ENCODE measurements at regions of chr1 and their contacts with region 1.

Region 1: DNA sequence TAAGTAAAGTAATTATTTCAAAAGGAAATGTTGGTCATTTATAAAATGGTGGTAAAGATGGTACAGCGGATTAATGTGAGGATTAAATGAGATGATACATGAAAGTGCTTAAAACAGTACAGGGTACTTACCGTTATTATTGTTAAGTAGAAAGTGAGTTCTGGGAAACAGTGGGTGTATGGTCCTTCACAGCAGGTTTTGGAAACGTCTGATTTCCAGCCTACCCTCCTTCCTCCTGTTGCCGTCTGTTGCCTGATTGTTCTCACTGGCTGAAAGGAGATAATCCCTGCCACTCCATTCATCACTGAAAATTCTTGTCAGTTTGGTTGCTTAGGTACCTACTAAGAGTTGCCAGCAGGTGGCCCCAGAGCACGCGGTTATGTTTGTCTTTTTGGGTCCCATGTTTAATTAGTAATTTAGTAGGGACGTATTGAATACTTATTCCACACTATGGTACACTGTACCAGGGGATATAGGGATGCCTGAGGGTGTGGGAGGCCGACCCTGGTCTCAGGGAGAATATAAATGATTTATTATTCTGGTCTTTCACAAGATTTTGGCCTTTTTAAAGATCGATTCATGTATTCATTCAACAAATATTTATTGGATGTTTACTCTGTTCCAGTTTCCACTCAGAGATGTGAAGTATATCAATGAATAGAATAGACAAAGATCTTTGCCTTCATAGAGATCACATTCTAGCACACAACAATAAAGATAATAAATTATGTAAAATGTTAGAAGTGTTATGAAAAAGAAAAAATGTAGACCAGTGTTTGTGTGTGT is 30.8 kb upstream of the RPTN start:
- DNase-seq: peak; percentile 38
- ATAC-seq: peak; percentile 45
- H3K4me3 ChIP-seq: no peak overlapping the region
- H3K27ac ChIP-seq: no peak overlapping the region
- H3K4me1 ChIP-seq: no peaks in the 10 kb centered on the region
- H3K27me3 ChIP-seq: no peaks in the 10 kb centered on the region
- CTCF ChIP-seq: peak; percentile 60
- POLR2A ChIP-seq: no peak
- RAD21 ChIP-seq: peak; percentile 54

Region 2: GRCh38 chr1:150944856-150945255 is 1245.0 kb before region 1 on chr1:
- CTCF ChIA-PET with region 1: no interaction called
- POLR2A ChIA-PET with region 1: no interaction called
- dilution Hi-C with region 1: no loop called
- in situ Hi-C with region 1: no loop called
- intact Hi-C with region 1: no loop called
- DNase-seq: no peak
- ATAC-seq: no peak
- H3K4me3 ChIP-seq: no peak overlapping the region
- H3K27ac ChIP-seq: no peak overlapping the region
- H3K4me1 ChIP-seq: no peaks in the 10 kb centered on the region
- H3K27me3 ChIP-seq: no peaks in the 10 kb centered on the region
- CTCF ChIP-seq: no peak
- POLR2A ChIP-seq: no peak
- RAD21 ChIP-seq: no peak

Region 3: GRCh38 chr1:151923436-151923835 is 266.4 kb before region 1 on chr1:
- CTCF ChIA-PET with region 1: no interaction called
- POLR2A ChIA-PET with region 1: no interaction called
- dilution Hi-C with region 1: no loop called
- in situ Hi-C with region 1: no loop called
- intact Hi-C with region 1: no loop called
- DNase-seq: no peak
- ATAC-seq: no peak
- H3K4me3 ChIP-seq: no peak overlapping the region
- H3K27ac ChIP-seq: no peak overlapping the region
- H3K4me1 ChIP-seq: no peaks in the 10 kb centered on the region
- H3K27me3 ChIP-seq: peaks cover 12% of the 10 kb centered on the region
- CTCF ChIP-seq: no peak
- POLR2A ChIP-seq: no peak
- RAD21 ChIP-seq: no peak

Region 4: GRCh38 chr1:151934048-151934493 is 255.8 kb before region 1 on chr1:
- CTCF ChIA-PET with region 1: no interaction called
- POLR2A ChIA-PET with region 1: no interaction called
- dilution Hi-C with region 1: no loop called
- in situ Hi-C with region 1: no loop called
- intact Hi-C with region 1: loop called (anchors 10 kb)
- DNase-seq: peak; percentile 60
- ATAC-seq: peak; percentile 96
- H3K4me3 ChIP-seq: no peak overlapping the region
- H3K27ac ChIP-seq: no peak overlapping the region
- H3K4me1 ChIP-seq: no peaks in the 10 kb centered on the region
- H3K27me3 ChIP-seq: peaks cover 7% of the 10 kb centered on the region
- CTCF ChIP-seq: peak; percentile 93
- POLR2A ChIP-seq: no peak
- RAD21 ChIP-seq: peak; percentile 96

Region 5: DNA sequence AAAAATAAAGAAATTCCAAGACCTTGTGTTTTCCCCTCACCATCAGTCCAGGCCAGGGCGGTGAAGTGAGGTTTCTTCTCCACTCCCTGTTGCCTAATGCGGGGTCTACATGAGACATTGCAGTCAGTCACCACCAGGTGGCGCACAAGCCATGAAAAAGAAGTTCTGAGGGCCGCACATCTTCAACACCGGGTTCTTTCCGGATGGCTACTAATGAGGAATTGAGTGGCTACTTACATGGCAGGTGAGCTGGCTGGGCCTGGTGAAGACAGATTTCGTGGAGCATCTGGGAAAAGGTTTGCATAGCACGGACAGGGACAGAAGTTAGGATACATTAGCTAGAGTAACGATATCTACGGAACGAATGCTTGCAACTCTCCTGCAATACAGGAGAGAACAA is 137.2 kb before region 1 on chr1:
- CTCF ChIA-PET with region 1: interaction called, 8 read pairs
- POLR2A ChIA-PET with region 1: no interaction called
- dilution Hi-C with region 1: no loop called
- in situ Hi-C with region 1: no loop called
- intact Hi-C with region 1: loop called (anchors 1 kb)
- DNase-seq: peak; percentile 71
- ATAC-seq: peak; percentile 25
- H3K4me3 ChIP-seq: no peak overlapping the region
- H3K27ac ChIP-seq: no peak overlapping the region
- H3K4me1 ChIP-seq: peaks cover 5% of the 10 kb centered on the region
- H3K27me3 ChIP-seq: peaks cover 14% of the 10 kb centered on the region
- CTCF ChIP-seq: peak; percentile 87
- POLR2A ChIP-seq: no peak
- RAD21 ChIP-seq: peak; percentile 78

Region 6: GRCh38 chr1:152141974-152142584 is 47.8 kb before region 1 on chr1:
- CTCF ChIA-PET with region 1: interaction called, 3 read pairs
- POLR2A ChIA-PET with region 1: no interaction called
- dilution Hi-C with region 1: no loop called
- in situ Hi-C with region 1: no loop called
- intact Hi-C with region 1: loop called (anchors 1 kb)
- DNase-seq: peak; percentile 54
- ATAC-seq: peak; percentile 86
- H3K4me3 ChIP-seq: no peak overlapping the region
- H3K27ac ChIP-seq: no peak overlapping the region
- H3K4me1 ChIP-seq: no peaks in the 10 kb centered on the region
- H3K27me3 ChIP-seq: no peaks in the 10 kb centered on the region
- CTCF ChIP-seq: peak; percentile 75
- POLR2A ChIP-seq: no peak
- RAD21 ChIP-seq: peak; percentile 78

Region 7: GRCh38 chr1:152227310-152227928 is 37.6 kb after region 1 on chr1:
- CTCF ChIA-PET with region 1: interaction called, 4 read pairs
- POLR2A ChIA-PET with region 1: no interaction called
- dilution Hi-C with region 1: no loop called
- in situ Hi-C with region 1: no loop called
- intact Hi-C with region 1: loop called (anchors 1 kb)
- DNase-seq: peak; percentile 2
- ATAC-seq: peak; percentile 32; the same call in 1 of the 2 replicates
- H3K4me3 ChIP-seq: no peak overlapping the region
- H3K27ac ChIP-seq: no peak overlapping the region
- H3K4me1 ChIP-seq: no peaks in the 10 kb centered on the region
- H3K27me3 ChIP-seq: no peaks in the 10 kb centered on the region
- CTCF ChIP-seq: no peak
- POLR2A ChIP-seq: no peak
- RAD21 ChIP-seq: no peak

Region 8: DNA sequence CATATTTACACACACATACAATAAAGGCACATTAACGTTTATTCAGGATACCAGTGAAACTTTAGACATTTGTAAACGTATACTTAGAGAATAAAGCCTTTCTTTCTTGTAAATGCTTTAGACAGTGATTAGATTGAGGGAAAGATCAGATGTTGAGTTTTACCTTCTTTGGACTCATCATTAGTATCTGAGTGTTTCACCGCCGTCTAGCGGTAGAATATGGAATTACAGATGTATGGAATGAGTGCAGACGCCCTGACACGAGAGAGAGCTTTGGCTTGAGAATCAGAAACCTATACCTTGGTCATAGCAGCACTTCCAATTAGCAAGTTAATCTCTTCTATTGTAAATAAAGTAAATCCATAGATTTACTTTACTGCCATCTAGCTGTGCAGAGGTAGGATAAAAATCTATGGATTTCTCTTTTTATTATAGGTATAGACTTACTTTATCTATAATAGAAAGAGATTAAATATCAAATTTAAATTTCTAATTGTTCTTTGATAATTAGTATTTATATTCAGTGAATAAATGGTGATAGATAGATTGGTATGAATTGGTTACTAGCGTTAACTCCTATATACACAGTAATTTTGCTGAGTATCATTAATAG is 157.4 kb after region 1 on chr1:
- CTCF ChIA-PET with region 1: no interaction called
- POLR2A ChIA-PET with region 1: no interaction called
- dilution Hi-C with region 1: no loop called
- in situ Hi-C with region 1: no loop called
- intact Hi-C with region 1: no loop called
- DNase-seq: peak; percentile 52
- ATAC-seq: peak; percentile 75; the same call in 1 of the 2 replicates
- H3K4me3 ChIP-seq: no peak overlapping the region
- H3K27ac ChIP-seq: no peak overlapping the region
- H3K4me1 ChIP-seq: no peaks in the 10 kb centered on the region
- H3K27me3 ChIP-seq: no peaks in the 10 kb centered on the region
- CTCF ChIP-seq: peak; percentile 62
- POLR2A ChIP-seq: no peak
- RAD21 ChIP-seq: peak; percentile 31

Region 9: GRCh38 chr1:152440635-152441471 is 251.0 kb after region 1 on chr1:
- CTCF ChIA-PET with region 1: interaction called, 3 read pairs
- POLR2A ChIA-PET with region 1: no interaction called
- dilution Hi-C with region 1: no loop called
- in situ Hi-C with region 1: no loop called
- intact Hi-C with region 1: loop called (anchors 2 kb)
- DNase-seq: peak; percentile 54
- ATAC-seq: peak; percentile 99
- H3K4me3 ChIP-seq: no peak overlapping the region
- H3K27ac ChIP-seq: no peak overlapping the region
- H3K4me1 ChIP-seq: no peaks in the 10 kb centered on the region
- H3K27me3 ChIP-seq: no peaks in the 10 kb centered on the region
- CTCF ChIP-seq: peak; percentile 78
- POLR2A ChIP-seq: no peak
- RAD21 ChIP-seq: peak; percentile 65

Region 10: DNA sequence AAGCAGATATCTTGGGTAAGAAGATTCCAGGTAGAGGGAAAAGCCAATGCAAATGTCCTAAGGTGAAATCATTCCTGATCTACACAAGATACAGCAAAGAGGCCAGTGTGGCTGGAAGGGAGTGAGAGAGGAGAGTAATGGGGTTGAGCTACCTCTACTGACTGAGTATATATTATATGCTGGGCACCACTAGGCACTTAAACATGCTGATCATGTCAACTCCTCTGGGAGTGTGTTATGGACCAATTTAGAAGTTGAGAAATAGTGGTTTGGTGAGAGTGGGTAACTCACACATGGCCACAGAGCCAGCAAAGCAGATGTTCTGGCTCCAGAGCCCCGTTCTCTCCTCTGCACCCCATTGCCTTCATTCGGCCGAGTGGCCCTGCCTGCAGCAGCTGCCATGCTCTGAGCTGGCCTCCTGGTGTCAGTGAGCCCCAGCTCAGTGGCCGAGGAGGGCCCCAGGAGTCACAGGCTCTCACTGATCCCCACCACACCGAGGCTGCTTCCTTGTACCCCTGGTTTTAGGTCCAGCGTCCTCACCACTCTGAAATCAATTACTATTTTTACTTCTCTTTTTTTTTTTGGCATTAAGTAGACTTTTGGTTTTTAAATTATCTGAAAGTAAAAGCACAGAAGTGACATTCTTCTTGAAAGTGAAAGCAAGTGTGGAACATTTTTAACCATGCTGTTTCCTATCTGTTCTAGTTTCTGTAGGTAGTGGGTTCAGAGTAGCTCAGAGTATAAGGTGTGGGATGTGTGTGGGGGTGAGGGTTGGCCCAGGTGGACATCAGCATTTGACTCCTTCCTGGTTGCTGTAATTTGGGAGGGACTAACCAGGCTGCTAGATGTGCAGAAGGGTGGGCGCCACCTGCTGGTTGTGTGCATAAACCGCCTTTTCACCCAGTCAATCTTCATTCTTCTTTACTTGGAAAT is 270.0 kb after region 1 on chr1:
- CTCF ChIA-PET with region 1: interaction called, 4 read pairs
- POLR2A ChIA-PET with region 1: no interaction called
- dilution Hi-C with region 1: no loop called
- in situ Hi-C with region 1: no loop called
- intact Hi-C with region 1: loop called (anchors 1 kb)
- DNase-seq: peak; percentile 52
- ATAC-seq: peak; percentile 76
- H3K4me3 ChIP-seq: no peak overlapping the region
- H3K27ac ChIP-seq: no peak overlapping the region
- H3K4me1 ChIP-seq: no peaks in the 10 kb centered on the region
- H3K27me3 ChIP-seq: no peaks in the 10 kb centered on the region
- CTCF ChIP-seq: peak; percentile 70
- POLR2A ChIP-seq: no peak
- RAD21 ChIP-seq: peak; percentile 19; the same call in 1 of the 2 replicates

Measured in IMR-90 (cell line).